ENCODE measurements at regions of chr10 and their contacts with region 1.

Region 1: GRCh38 chr10:95289003-95289920 is 1.5 kb downstream of the PDLIM1 start:
- DNase-seq: peak in 1 of 2 donors; percentile 59
- ATAC-seq: peak; percentile 45 to 62
- H3K4me3 ChIP-seq: peak overlapping the region; percentile 66 to 89 (median 72)
- H3K27ac ChIP-seq: peak overlapping the region; percentile 80 to 97 (median 92)
- H3K4me1 ChIP-seq: peaks cover 32 to 41% of the 10 kb centered on the region in 2 donors
- H3K27me3 ChIP-seq: no peaks in the 10 kb centered on the region
- CTCF ChIP-seq: peak in 4 of 5 experiments; percentile 15 to 34 (median 28)
- POLR2A ChIP-seq: peak; percentile 59 to 78

Region 2: GRCh38 chr10:95221124-95221523 is 68.1 kb before region 1 on chr10:
- in situ Hi-C with region 1: no loop called
- intact Hi-C with region 1: no loop called
- DNase-seq: no peak
- ATAC-seq: no peak
- H3K4me3 ChIP-seq: no peak overlapping the region
- H3K27ac ChIP-seq: no peak overlapping the region
- H3K4me1 ChIP-seq: no peaks in the 10 kb centered on the region
- H3K27me3 ChIP-seq: no peaks in the 10 kb centered on the region
- CTCF ChIP-seq: no peak
- POLR2A ChIP-seq: no peak

Region 3: GRCh38 chr10:95246579-95247051 is 42.6 kb before region 1 on chr10:
- in situ Hi-C with region 1: no loop called
- intact Hi-C with region 1: loop called (anchors 5 kb)
- DNase-seq: peak; percentile 52 to 64
- ATAC-seq: peak; percentile 40 to 65
- H3K4me3 ChIP-seq: no peak overlapping the region
- H3K27ac ChIP-seq: peak overlapping the region; percentile 72 to 85 (median 78)
- H3K4me1 ChIP-seq: peaks cover 50 to 74% of the 10 kb centered on the region in 2 donors
- H3K27me3 ChIP-seq: no peaks in the 10 kb centered on the region
- CTCF ChIP-seq: peak; percentile 72 to 87 (median 83)
- POLR2A ChIP-seq: no peak

Region 4: DNA sequence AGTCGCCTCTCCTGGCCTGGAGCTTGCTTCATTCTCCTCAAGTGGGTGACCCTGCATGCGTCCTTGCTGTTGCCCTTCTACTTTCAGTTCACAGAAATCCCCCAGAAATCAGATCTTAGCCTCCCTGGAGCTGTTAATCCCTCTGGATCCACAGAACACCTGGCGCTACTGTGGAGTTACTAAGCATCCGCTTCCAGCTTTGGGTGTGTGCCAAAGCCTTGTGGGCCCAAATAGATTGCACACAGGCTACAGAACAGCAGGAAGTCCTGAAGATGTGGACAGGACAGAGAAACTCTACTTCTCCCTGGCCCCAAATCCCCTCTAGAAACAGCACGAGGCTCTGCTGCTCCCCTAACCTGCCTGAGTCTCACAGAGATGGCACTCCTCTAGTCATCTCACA is 38.1 kb after region 1 on chr10:
- in situ Hi-C with region 1: no loop called
- intact Hi-C with region 1: loop called (anchors 5 kb)
- DNase-seq: peak; percentile 80 to 92
- ATAC-seq: peak; percentile 91
- H3K4me3 ChIP-seq: no peak overlapping the region
- H3K27ac ChIP-seq: peak overlapping the region; percentile 76 to 86 (median 83)
- H3K4me1 ChIP-seq: peaks cover 57 to 74% of the 10 kb centered on the region in 2 donors
- H3K27me3 ChIP-seq: no peaks in the 10 kb centered on the region
- CTCF ChIP-seq: peak in 2 of 5 experiments; percentile 20 to 38
- POLR2A ChIP-seq: peak in 1 of 2 donors; percentile 18

Region 5: DNA sequence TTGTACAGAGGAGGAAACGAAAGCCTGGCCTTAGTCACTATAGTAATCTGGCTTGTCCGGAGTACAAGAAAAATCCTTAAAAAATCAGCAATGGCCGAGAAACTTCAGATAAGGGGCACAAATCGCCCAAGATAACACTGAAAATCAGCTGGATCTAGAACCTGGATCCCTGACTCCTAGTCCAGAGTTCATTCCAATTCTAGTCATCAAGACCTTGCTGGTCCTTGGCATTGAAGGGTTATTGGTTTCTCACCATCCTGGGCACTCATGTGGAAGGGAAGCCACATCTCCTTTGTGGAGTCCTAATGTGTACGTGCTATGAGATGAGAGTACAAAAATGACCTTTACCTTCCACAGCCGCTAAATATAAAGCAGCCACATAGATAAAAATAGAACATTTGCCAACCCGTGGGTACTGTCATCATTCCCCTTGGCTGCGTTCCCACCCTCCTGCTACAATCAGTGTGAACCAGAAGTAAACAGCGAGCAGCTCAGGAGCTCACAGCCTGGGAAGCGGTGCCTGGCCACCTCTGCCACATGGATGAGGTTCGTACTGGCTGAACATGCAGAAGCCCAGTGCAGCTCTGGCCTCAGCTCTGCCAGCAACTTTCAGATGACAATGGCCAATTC is 117.5 kb after region 1 on chr10:
- in situ Hi-C with region 1: no loop called
- intact Hi-C with region 1: loop called (anchors 5 kb)
- DNase-seq: peak; percentile 94 to 96
- ATAC-seq: peak; percentile 85 to 92
- H3K4me3 ChIP-seq: peak overlapping the region in 1 of 4 donors; percentile 14
- H3K27ac ChIP-seq: peak overlapping the region; percentile 91 to 98 (median 97)
- H3K4me1 ChIP-seq: peaks cover 73 to 77% of the 10 kb centered on the region in 2 donors
- H3K27me3 ChIP-seq: no peaks in the 10 kb centered on the region
- CTCF ChIP-seq: no peak
- POLR2A ChIP-seq: peak; percentile 64 to 89

Region 6: DNA sequence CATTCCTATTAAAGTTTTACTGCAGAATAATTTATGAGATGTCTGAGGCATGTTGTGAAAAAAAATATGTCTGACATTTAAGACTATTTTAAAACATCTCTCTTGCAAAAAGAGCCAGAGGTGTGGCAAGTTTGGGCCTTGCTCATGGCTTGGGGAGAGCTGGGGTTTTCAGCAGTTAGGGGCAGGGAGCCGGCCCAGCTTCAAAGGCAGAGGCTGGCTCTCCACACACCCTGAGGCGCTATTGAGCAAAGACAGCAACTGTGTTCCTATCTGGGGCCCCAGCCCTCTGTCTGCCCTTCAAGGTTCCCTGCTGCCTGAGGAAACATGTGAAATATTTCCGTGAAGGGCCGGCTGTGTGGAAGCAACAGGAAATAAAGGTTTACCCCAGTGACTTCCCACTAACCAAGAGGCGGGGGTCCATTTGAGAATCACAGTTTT is 177.9 kb after region 1 on chr10:
- in situ Hi-C with region 1: no loop called
- intact Hi-C with region 1: no loop called
- DNase-seq: peak; percentile 64 to 86
- ATAC-seq: peak; percentile 75 to 91
- H3K4me3 ChIP-seq: no peak overlapping the region
- H3K27ac ChIP-seq: peak overlapping the region; percentile 92 to 99 (median 95)
- H3K4me1 ChIP-seq: peaks cover 73 to 89% of the 10 kb centered on the region in 2 donors
- H3K27me3 ChIP-seq: no peaks in the 10 kb centered on the region
- CTCF ChIP-seq: peak in 1 of 5 experiments; percentile 43
- POLR2A ChIP-seq: peak in 1 of 2 donors; percentile 36